Activated T-helper 2 cell treated with anti-CD3 and anti-CD28 coated beads, Interferon-gamma antibody, Interleukin-2, Interleukin-4, amounts not matched to agents 10 μg/mL and 5 μg/mL and 100 μg/mL, durations not matched to agents 14 hours and 24 hours and 36 hours (primary cell): ENCODE measurements at regions of chr2 and their contacts with region 1.

Region 1: GRCh38 chr2:196205881-196206435 is 34.6 kb upstream of the STK17B start:
- DNase-seq: no peak
- H3K4me3 Mint-ChIP-seq: no peak overlapping the region
- H3K27ac Mint-ChIP-seq: no peak overlapping the region
- H3K4me1 Mint-ChIP-seq: peaks cover 41% of the 10 kb centered on the region
- H3K27me3 Mint-ChIP-seq: no peaks in the 10 kb centered on the region

Region 2: GRCh38 chr2:195961873-195962272 is 244.1 kb before region 1 on chr2:
- intact Hi-C with region 1: no loop called
- DNase-seq: no peak
- H3K4me3 Mint-ChIP-seq: no peak overlapping the region
- H3K27ac Mint-ChIP-seq: no peak overlapping the region
- H3K4me1 Mint-ChIP-seq: no peaks in the 10 kb centered on the region
- H3K27me3 Mint-ChIP-seq: peaks cover 3% of the 10 kb centered on the region

Region 3: GRCh38 chr2:196088203-196088602 is 117.8 kb before region 1 on chr2:
- intact Hi-C with region 1: no loop called
- DNase-seq: no peak
- H3K4me3 Mint-ChIP-seq: no peak overlapping the region
- H3K27ac Mint-ChIP-seq: no peak overlapping the region
- H3K4me1 Mint-ChIP-seq: peaks cover 9% of the 10 kb centered on the region
- H3K27me3 Mint-ChIP-seq: no peaks in the 10 kb centered on the region

Region 4: DNA sequence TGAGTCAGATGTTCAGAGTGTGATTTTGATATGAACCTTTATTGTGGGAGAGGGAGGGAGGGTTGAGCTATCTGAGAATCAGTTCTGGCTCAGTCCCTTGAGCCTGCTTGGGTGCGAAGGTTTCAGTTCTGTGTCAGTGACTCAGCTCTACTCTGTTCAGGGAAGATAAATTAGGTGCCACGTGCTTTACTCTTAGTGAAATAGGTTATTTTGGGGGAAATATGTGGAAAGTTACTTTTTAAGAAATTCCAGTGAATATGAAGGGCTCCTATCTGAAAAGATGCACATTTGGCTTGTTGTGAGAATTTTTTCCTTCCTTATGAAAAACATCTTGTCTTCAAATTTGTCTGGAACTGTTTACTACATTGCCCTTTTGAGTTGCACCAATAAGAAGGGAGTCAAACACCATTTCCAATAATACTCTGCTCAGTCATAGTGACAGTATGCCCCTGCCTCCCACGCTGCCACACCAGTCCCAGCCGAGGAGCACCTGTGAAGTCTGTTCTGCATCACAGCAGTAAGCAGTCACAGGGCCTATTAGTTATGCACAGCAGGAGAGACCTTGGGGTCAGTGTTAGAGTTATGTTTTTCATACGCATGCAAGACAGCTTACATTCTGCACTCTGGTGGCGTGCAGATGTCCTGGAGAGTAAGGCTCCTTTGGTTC is 104.5 kb before region 1 on chr2:
- intact Hi-C with region 1: no loop called
- DNase-seq: no peak
- H3K4me3 Mint-ChIP-seq: no peak overlapping the region
- H3K27ac Mint-ChIP-seq: no peak overlapping the region
- H3K4me1 Mint-ChIP-seq: peaks cover 23% of the 10 kb centered on the region
- H3K27me3 Mint-ChIP-seq: peaks cover 5% of the 10 kb centered on the region

Region 5: DNA sequence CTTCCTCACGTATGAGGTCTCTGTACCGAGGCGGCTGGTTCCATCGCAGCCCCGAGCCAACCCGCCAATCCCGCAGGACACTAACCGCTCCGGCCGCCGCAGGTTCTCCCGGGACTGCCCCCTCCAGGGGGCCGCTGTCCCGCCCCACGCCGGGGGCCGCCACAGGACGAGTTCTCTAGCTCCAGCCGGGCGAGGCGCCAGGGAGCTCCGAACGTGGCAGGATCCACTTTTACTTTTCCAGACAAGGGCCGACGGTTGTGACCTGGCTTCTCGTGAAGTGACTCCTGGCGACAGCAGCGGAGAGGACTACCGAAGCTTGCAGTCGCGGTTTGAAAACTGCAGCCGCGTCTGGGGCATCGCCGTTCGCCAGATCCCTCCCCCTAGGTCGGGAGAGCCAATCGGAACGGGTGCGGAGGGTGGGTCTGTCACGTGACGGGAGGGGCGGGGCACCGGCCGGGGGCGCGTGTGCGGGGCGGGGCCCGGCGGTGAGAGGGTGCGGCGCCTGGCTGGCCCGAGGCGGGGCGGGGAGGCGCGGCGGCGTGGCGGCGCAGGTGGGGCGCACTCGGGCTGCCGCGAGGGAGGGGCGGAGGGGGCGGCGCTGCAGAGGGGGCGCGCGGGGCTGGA is 34.6 kb before region 1 on chr2 and contains the start of gene STK17B:
- intact Hi-C with region 1: loop called (anchors 1 kb)
- DNase-seq: peak; percentile 94
- H3K4me3 Mint-ChIP-seq: peak within 1 kb of the TSS; percentile 96
- H3K27ac Mint-ChIP-seq: peak within 1 kb of the TSS; percentile 93
- H3K4me1 Mint-ChIP-seq: peaks cover 44% of the 10 kb centered on the region
- H3K27me3 Mint-ChIP-seq: no peaks in the 10 kb centered on the region
- total RNA-seq, gene STK17B: 176 and 178 TPM in 2 replicates

Region 6: DNA sequence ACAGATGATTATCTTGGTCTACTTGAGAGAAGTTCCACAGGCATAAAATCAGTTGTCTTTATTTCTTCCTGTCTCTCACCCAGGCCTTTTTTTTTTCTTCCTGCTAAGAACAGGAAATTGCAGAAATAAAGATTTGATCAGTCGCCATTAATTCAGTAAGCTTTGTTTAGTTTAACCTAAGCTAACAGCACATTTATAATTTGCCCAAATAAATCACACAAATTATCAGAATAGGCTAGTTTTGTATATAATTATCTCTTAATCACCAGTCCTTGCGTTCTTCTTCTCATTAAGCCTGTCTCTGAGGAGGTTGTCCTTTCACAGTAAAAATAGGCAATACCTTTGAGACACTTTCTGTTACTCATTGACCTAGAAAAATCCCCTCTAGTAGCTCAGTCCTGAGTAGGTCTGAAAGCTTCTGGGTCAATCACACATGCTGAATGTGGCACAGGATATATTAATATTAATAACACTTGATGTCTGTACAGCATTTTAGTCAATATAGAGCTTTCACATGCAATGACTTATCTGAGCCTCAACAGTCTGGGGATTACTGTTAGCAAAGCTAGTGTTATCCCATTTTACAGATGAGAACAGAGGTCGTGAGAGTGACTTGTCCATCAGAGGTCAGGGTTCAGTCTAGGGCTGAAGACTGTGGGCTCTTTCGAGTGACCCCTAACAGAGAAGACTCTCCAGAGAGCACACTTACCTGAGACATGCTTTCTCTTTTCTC is 23.4 kb before region 1 on chr2:
- intact Hi-C with region 1: loop called (anchors 1 kb)
- DNase-seq: no peak
- H3K4me3 Mint-ChIP-seq: peak overlapping the region; percentile 74
- H3K27ac Mint-ChIP-seq: peak overlapping the region; percentile 96
- H3K4me1 Mint-ChIP-seq: peaks cover 68% of the 10 kb centered on the region
- H3K27me3 Mint-ChIP-seq: no peaks in the 10 kb centered on the region

Region 7: GRCh38 chr2:196233805-196234475 is 28.0 kb after region 1 on chr2:
- intact Hi-C with region 1: loop called (anchors 1 kb)
- DNase-seq: no peak
- H3K4me3 Mint-ChIP-seq: no peak overlapping the region
- H3K27ac Mint-ChIP-seq: peak overlapping the region; percentile 62
- H3K4me1 Mint-ChIP-seq: peaks cover 79% of the 10 kb centered on the region
- H3K27me3 Mint-ChIP-seq: no peaks in the 10 kb centered on the region

Region 8: DNA sequence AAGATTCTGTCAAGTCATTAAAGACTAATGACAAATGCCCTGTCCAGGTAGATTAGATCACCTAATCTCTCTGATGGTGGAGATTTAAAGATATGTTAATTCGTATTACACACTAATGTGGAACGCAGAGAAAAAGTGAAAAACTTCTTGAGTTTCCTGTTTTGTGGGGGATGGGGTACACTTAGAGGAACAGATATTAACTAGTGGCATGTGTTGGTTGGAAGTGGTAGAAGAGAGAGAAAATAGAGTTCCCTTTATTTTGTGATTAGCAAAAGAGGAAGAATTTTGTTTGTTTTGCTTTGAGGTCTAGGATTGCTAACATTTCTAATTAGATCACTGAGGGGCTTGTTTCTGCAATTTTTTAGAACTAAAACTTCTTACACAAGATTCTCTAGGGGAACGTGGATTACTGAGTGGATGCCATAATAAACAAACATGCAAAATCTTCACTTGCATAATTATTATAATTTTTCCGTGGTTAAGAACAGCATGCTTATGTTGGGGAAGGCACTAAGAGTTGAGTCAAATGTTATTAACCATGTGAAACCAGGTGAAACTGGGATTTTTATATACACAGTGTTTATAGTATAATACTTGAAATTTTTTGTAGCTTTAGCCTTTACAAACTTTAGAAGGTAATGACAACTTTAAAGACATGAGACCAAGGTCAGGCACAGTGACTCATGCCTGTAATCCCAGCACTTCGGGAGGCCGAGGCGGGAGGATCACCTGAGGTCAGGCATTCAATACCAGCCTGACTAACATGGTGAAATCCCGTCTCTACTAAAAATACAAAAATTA is 62.8 kb after region 1 on chr2:
- intact Hi-C with region 1: loop called (anchors 2 kb)
- DNase-seq: no peak
- H3K4me3 Mint-ChIP-seq: peak overlapping the region; percentile 32
- H3K27ac Mint-ChIP-seq: peak overlapping the region; percentile 36
- H3K4me1 Mint-ChIP-seq: peaks cover 47% of the 10 kb centered on the region
- H3K27me3 Mint-ChIP-seq: no peaks in the 10 kb centered on the region